ENCODE measurements at regions of chr14 and their contacts with region 1.

Region 1: DNA sequence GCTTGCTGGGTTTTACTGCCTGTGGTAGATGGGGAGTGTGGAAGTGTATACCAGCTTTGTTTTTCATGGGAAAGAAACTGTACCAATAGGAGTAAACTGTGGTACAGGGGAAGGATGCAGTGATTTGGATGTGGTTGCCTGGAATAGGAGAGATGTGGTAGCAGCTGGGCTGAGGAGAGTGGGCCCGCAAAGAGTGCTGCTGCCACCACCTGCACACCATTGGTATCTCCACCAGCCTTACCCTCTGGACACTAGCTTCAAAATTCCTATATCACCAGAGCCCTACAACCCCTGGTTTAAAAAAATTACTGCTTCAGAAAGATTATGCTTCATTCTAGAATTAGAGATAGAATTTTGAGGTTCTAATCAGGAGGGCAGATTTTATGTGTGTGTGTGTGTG is 53.6 kb downstream of the AKAP6 start:
- DNase-seq: peak; percentile 41
- H3K4me3 ChIP-seq: no peak overlapping the region
- H3K27ac ChIP-seq: no peak overlapping the region
- H3K4me1 ChIP-seq: peaks cover 9% of the 10 kb centered on the region
- H3K27me3 ChIP-seq: no peaks in the 10 kb centered on the region
- CTCF ChIP-seq: peak; percentile 65 to 88

Region 2: DNA sequence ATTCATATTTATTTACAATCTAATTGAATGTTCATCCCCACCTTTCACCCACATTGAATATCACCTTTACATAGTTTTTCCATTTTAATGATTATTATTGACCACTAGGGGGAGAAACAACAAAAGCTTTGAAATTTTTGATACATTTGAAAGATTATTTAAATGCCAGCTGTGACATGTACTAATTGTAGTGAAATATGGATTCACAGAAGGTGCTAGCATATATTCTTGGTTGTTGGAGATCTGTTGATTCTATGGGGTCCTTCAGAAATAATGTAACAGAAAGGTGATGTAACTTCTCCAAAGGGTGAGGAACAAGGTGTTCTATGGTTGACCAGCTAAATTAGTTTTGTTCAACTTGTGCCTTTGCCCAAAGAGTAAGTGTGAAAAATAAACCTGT is 872.5 kb before region 1 on chr14:
- CTCF ChIA-PET with region 1: no interaction called
- dilution Hi-C with region 1: no loop called
- in situ Hi-C with region 1: no loop called
- intact Hi-C with region 1: loop called (anchors 2 kb)
- DNase-seq: peak; percentile 20
- H3K4me3 ChIP-seq: no peak overlapping the region
- H3K27ac ChIP-seq: no peak overlapping the region
- H3K4me1 ChIP-seq: no peaks in the 10 kb centered on the region
- H3K27me3 ChIP-seq: no peaks in the 10 kb centered on the region
- CTCF ChIP-seq: peak; percentile 33 to 46

Region 3: GRCh38 chr14:32202998-32203882 is 179.5 kb before region 1 on chr14 and contains the start of gene RNU6-8:
- CTCF ChIA-PET with region 1: no interaction called
- dilution Hi-C with region 1: no loop called
- in situ Hi-C with region 1: no loop called
- intact Hi-C with region 1: loop called (anchors 1 kb)
- DNase-seq: peak; percentile 79
- H3K4me3 ChIP-seq: peak within 1 kb of the TSS; percentile 68 to 74 (median 74)
- H3K27ac ChIP-seq: peak within 1 kb of the TSS; percentile 91
- H3K4me1 ChIP-seq: peaks cover 38% of the 10 kb centered on the region
- H3K27me3 ChIP-seq: no peaks in the 10 kb centered on the region
- CTCF ChIP-seq: no peak
- total RNA-seq, gene RNU6-8: not detected

Region 4: DNA sequence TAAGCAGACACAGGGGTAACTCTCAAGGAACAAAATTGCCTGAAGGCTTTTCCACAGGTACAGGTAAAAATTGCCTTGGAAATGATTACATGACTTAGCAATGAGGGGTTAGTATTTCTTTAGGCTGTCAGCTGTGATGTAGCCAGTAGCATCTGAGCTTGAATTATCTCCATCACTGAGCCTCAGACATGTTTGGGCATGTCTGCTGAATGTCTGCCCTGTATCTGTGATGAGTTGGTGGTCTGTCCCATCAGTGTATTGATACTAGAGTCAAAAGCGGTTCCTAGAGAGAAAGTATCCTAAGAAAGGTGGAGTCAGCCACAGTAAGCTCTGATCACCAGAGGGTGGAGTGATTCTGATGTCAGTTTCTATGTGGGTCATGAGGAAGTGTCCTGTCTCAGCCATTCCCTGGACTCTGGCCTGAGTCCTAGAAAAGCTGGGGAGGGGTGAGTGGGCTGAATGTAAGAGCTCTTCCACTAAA is 37.4 kb before region 1 on chr14:
- CTCF ChIA-PET with region 1: no interaction called
- dilution Hi-C with region 1: no loop called
- in situ Hi-C with region 1: no loop called
- intact Hi-C with region 1: loop called (anchors 5 kb)
- DNase-seq: peak; percentile 74
- H3K4me3 ChIP-seq: no peak overlapping the region
- H3K27ac ChIP-seq: peak overlapping the region; percentile 87
- H3K4me1 ChIP-seq: peaks cover 54% of the 10 kb centered on the region
- H3K27me3 ChIP-seq: no peaks in the 10 kb centered on the region
- CTCF ChIP-seq: peak in 1 of 2 donors; percentile 6

Region 5: DNA sequence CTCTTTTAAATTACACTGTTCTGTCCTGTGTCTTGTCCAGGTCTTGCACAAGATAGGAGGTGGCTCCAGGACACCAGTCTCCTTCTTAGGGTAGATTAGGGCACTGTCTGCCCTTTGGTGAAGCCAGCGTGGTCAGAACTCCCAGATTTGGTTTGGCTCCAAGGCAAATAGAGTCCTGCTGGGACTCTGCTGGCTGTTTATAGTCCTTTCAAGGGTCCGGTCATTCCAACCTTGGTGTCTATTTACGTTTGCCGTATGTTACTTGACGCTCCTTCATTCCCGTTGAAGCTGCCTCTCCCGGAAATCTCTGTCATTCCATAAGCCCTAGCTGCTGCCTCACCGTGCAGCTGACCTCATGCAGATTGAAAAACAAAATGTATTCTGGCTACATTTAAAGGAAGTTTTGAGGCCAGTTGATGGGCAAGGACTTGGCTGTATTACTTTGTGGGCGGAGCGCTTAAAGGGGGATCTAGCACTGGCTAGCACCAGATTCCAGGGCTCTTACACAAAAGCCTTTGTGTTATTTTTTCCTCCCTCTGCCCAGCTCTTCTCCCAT is 127.0 kb after region 1 on chr14:
- CTCF ChIA-PET with region 1: interaction called, 7 read pairs
- dilution Hi-C with region 1: no loop called
- in situ Hi-C with region 1: no loop called
- intact Hi-C with region 1: loop called (anchors 1 kb)
- DNase-seq: peak; percentile 93
- H3K4me3 ChIP-seq: peak overlapping the region in 1 of 3 experiments; percentile 10
- H3K27ac ChIP-seq: peak overlapping the region; percentile 87
- H3K4me1 ChIP-seq: peaks cover 41% of the 10 kb centered on the region
- H3K27me3 ChIP-seq: no peaks in the 10 kb centered on the region
- CTCF ChIP-seq: no peak

Region 6: GRCh38 chr14:32560209-32560857 is 177.6 kb after region 1 on chr14:
- CTCF ChIA-PET with region 1: no interaction called
- dilution Hi-C with region 1: no loop called
- in situ Hi-C with region 1: no loop called
- intact Hi-C with region 1: loop called (anchors 1 kb)
- DNase-seq: peak; percentile 74
- H3K4me3 ChIP-seq: no peak overlapping the region
- H3K27ac ChIP-seq: peak overlapping the region; percentile 53
- H3K4me1 ChIP-seq: peaks cover 19% of the 10 kb centered on the region
- H3K27me3 ChIP-seq: no peaks in the 10 kb centered on the region
- CTCF ChIP-seq: peak; percentile 84 to 98

Measured in mammary epithelial cell (primary cell).